Body of pancreas (tissue), 4 donors: ENCODE measurements at regions of chr9 and their contacts with region 1.

Region 1: DNA sequence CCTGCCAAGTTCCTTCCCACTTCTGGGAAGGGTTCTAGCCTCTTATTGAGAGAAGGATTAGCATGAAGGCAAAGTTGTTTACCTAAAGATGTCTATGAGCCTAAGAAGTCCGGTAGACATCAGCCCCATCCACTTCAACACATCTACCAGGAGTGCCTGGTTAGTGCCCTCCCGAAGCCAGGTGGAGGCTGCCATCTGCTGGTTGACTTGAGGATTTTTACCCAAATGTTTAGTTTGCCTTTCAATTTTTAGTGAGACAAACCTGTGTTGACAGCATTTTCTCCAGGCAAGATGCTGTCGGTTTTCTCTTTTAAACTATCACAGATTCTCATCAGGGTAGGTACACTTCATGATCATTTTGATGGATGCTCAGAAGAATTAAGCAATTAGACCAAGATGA is 83.6 kb upstream of the TNFSF8 start:
- DNase-seq: peak; percentile 61 to 69 (median 64)
- ATAC-seq: peak; percentile 79
- H3K4me3 ChIP-seq: no peak overlapping the region
- H3K27ac ChIP-seq: no peak overlapping the region
- H3K4me1 ChIP-seq: no peaks in the 10 kb centered on the region
- H3K27me3 ChIP-seq: no peaks in the 10 kb centered on the region
- CTCF ChIP-seq: peak; percentile 57 to 81 (median 78)
- POLR2A ChIP-seq: no peak

Region 2: DNA sequence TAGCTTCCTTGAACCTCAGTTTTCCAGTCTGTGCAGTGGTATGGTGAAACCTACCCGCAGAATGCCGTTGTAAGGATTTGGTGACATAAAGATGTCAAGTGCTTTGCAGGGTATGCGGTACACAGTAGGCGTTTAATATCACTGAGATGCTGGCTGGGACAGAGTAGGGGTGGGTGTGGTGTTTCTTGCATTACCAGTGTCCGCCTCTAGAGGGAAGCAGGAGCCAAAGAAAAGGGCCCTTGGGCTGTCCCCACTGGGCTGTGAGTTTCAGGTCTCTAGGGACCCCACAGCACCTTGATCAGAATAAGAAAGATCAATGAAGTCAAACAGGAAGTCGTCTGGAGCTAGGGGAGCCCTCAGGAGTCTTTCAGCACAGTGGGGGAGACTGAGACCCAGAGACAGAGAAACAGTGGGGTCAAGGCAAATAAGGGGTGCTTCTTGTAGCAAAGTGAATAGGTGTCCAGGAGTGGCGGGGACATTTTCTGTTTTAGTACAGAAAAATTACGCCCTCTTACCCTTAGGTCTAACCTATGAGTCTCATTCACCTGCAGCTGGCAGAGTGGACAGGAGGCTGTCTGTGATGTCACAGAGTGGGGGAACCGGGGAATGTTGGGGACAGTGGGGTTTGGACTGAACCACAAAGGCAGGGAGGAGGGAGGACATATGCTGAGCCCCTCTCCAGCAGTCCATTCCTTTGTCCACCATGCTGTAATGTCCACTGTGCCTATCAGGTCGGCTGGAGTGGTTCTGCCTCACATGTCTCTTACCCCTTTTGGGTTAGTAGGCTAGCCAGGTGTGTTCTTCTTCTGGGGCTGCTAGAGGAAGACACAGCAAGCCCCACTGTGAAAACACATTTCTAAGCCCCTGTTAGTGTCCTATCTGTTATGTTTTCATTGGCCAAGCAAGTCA is 351.7 kb before region 1 on chr9:
- intact Hi-C with region 1: loop called (anchors 10 kb)
- DNase-seq: peak; percentile 41 to 62 (median 56)
- ATAC-seq: peak; percentile 74
- H3K4me3 ChIP-seq: no peak overlapping the region
- H3K27ac ChIP-seq: no peak overlapping the region
- H3K4me1 ChIP-seq: no peaks in the 10 kb centered on the region
- H3K27me3 ChIP-seq: no peaks in the 10 kb centered on the region
- CTCF ChIP-seq: peak; percentile 53 to 74 (median 70)
- POLR2A ChIP-seq: no peak

Region 3: GRCh38 chr9:114738581-114739316 is 275.2 kb before region 1 on chr9:
- intact Hi-C with region 1: loop called (anchors 5 kb)
- DNase-seq: peak; percentile 71 to 83 (median 73)
- ATAC-seq: peak; percentile 83
- H3K4me3 ChIP-seq: no peak overlapping the region
- H3K27ac ChIP-seq: no peak overlapping the region
- H3K4me1 ChIP-seq: no peaks in the 10 kb centered on the region
- H3K27me3 ChIP-seq: no peaks in the 10 kb centered on the region
- CTCF ChIP-seq: peak; percentile 72 to 93 (median 87)
- POLR2A ChIP-seq: no peak

Region 4: GRCh38 chr9:114786251-114786650 is 227.7 kb before region 1 on chr9:
- intact Hi-C with region 1: no loop called
- DNase-seq: peak in 3 of 4 donors; percentile 29 to 50 (median 33)
- ATAC-seq: peak; percentile 81
- H3K4me3 ChIP-seq: no peak overlapping the region
- H3K27ac ChIP-seq: peak overlapping the region in 3 of 4 donors; percentile 32 to 40 (median 34)
- H3K4me1 ChIP-seq: no peaks in the 10 kb centered on the region
- H3K27me3 ChIP-seq: no peaks in the 10 kb centered on the region
- CTCF ChIP-seq: no peak
- POLR2A ChIP-seq: no peak

Region 5: GRCh38 chr9:114911167-114911821 is 102.7 kb before region 1 on chr9:
- intact Hi-C with region 1: loop called (anchors 10 kb)
- DNase-seq: peak in 2 of 4 donors; percentile 20 to 30
- ATAC-seq: peak; percentile 54
- H3K4me3 ChIP-seq: no peak overlapping the region
- H3K27ac ChIP-seq: no peak overlapping the region
- H3K4me1 ChIP-seq: peaks cover 16% of the 10 kb centered on the region
- H3K27me3 ChIP-seq: no peaks in the 10 kb centered on the region
- CTCF ChIP-seq: peak; percentile 67 to 80 (median 70)
- POLR2A ChIP-seq: no peak

Region 6: GRCh38 chr9:115198001-115198400 is 184.0 kb after region 1 on chr9:
- intact Hi-C with region 1: no loop called
- DNase-seq: peak in 2 of 4 donors; percentile 8 to 40
- ATAC-seq: no peak
- H3K4me3 ChIP-seq: no peak overlapping the region
- H3K27ac ChIP-seq: no peak overlapping the region
- H3K4me1 ChIP-seq: no peaks in the 10 kb centered on the region
- H3K27me3 ChIP-seq: no peaks in the 10 kb centered on the region
- CTCF ChIP-seq: no peak
- POLR2A ChIP-seq: no peak